ENCODE measurements at regions of chr16 and their contacts with region 1.

Region 1: DNA sequence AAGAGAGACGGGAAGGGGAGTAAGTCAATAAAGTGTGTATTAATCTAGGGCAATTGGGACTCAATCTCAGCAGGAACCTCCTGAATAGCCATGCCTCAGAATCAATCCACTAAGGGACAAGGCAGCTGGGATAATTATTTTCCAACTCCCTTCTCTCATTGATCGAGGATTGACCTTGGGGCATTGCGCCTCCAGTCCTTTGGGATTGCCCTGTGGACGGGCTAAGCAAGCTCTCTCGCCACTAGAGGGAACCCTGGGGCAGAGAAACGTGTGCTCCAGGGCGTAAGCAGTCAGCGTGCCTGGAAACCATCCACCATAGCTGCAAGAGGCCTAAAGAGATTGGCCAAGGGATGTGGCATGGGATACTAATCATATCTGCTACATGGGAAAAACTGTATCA is 53.9 kb upstream of the ERCC4 start:
- DNase-seq: peak; percentile 73 to 76
- H3K4me3 ChIP-seq: no peak overlapping the region
- H3K4me3 Mint-ChIP-seq: no peak overlapping the region
- H3K27ac Mint-ChIP-seq: no peak overlapping the region
- H3K4me1 ChIP-seq: no peaks in the 10 kb centered on the region
- H3K4me1 Mint-ChIP-seq: no peaks in the 10 kb centered on the region
- H3K27me3 ChIP-seq: no peaks in the 10 kb centered on the region
- H3K27me3 Mint-ChIP-seq: peaks cover 14% of the 10 kb centered on the region
- CTCF ChIP-seq: peak; percentile 72 to 85

Region 2: DNA sequence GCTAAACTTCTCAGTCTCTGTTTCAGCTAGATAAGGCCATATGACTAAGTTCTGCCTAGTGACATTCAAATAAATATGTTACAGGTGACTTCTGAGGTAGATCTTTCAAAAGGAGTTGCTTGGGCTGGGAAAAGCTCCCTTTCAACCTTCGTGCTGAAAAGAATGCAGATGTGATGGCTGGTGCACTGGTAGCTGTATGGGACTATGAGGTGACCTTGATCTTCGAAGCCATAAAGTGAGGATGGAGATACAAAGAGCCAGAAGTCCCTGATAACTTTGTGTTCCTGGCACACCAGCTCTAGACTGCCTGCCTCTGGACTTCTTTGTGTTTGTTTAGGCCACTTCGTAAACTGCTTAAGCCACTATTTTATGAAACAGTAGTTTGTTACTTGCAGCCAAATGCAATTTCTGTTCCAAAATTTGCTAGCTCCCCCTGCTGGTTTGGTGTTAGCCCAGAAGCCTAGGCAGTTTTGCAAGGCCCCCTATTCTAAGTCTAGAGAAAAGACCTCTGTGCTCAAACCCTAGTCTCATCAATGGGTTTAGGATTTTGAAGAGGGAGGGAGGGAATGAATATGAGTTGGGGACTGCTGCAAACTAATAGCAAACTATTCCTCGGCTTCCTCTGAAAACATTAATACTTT is 30.6 kb after region 1 on chr16:
- CTCF ChIA-PET with region 1: interaction called, 4 read pairs
- POLR2A ChIA-PET with region 1: no interaction called
- intact Hi-C with region 1: loop called (anchors 1 kb)
- DNase-seq: peak in 1 of 2 experiments; percentile 32
- H3K4me3 ChIP-seq: no peak overlapping the region
- H3K4me3 Mint-ChIP-seq: no peak overlapping the region
- H3K27ac Mint-ChIP-seq: no peak overlapping the region
- H3K4me1 ChIP-seq: no peaks in the 10 kb centered on the region
- H3K4me1 Mint-ChIP-seq: no peaks in the 10 kb centered on the region
- H3K27me3 ChIP-seq: no peaks in the 10 kb centered on the region; the same call in 1 of the 2 replicates
- H3K27me3 Mint-ChIP-seq: peaks cover 9% of the 10 kb centered on the region
- CTCF ChIP-seq: peak; percentile 33 to 37